ENCODE measurements at regions of chr18 and their contacts with region 1.

Region 1: GRCh38 chr18:10851824-10852319 is 297.5 kb downstream of the PIEZO2 start:
- DNase-seq: peak; percentile 27
- ATAC-seq: no peak
- H3K4me3 ChIP-seq: no peak overlapping the region
- H3K27ac ChIP-seq: no peak overlapping the region
- H3K4me1 ChIP-seq: no peaks in the 10 kb centered on the region
- H3K27me3 ChIP-seq: peaks cover 26% of the 10 kb centered on the region
- CTCF ChIP-seq: peak; percentile 46 to 75 (median 51); a peak in 4 of 6 replicates
- POLR2A ChIP-seq: no peak
- RAD21 ChIP-seq: peak; percentile 63

Region 2: DNA sequence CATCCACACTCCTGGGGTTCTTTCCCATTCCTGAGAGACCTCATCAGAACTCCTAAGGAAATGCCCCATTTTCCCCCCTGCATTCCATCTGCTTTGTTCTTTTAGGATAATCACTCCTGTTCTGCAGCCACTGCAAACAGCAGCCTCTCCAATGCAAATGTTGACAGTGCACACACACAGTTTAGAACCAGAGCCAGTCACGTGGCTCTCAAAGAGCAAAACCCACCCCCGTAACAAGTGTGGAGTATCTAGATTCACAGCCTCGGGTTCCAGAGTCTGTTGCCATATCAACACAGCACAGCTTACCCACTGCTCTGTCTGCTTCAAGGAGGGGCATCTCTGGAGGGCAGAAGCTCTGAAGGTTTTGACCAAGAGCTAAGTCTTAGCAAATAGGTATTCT is 146.1 kb before region 1 on chr18:
- CTCF ChIA-PET with region 1: no interaction called
- POLR2A ChIA-PET with region 1: no interaction called
- RAD21 ChIA-PET with region 1: no interaction called
- intact Hi-C with region 1: no loop called
- DNase-seq: no peak
- ATAC-seq: no peak
- H3K4me3 ChIP-seq: no peak overlapping the region
- H3K27ac ChIP-seq: no peak overlapping the region
- H3K4me1 ChIP-seq: no peaks in the 10 kb centered on the region
- H3K27me3 ChIP-seq: peaks cover 46% of the 10 kb centered on the region
- CTCF ChIP-seq: no peak
- POLR2A ChIP-seq: no peak
- RAD21 ChIP-seq: no peak

Region 3: DNA sequence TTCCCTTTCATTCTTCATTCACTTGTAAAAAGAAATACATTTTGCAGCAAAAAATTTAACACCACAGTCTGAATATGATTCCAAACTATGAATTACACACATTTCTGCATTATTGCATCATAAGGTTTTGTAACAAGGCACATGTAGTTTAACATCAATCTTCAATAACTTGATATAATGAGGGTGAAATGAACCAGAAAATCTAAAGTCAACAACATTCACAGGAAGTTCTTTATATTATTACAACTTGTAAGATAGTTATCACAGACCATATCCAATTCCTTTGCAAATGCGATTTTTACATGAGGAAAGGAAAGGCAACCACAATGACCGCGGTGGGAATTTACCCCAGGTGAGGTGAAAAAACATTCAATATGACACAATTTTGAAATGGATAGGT is 112.7 kb before region 1 on chr18:
- CTCF ChIA-PET with region 1: no interaction called
- POLR2A ChIA-PET with region 1: no interaction called
- RAD21 ChIA-PET with region 1: no interaction called
- intact Hi-C with region 1: no loop called
- DNase-seq: no peak
- ATAC-seq: no peak
- H3K4me3 ChIP-seq: no peak overlapping the region
- H3K27ac ChIP-seq: no peak overlapping the region
- H3K4me1 ChIP-seq: no peaks in the 10 kb centered on the region
- H3K27me3 ChIP-seq: peaks cover 39% of the 10 kb centered on the region
- CTCF ChIP-seq: no peak
- POLR2A ChIP-seq: no peak
- RAD21 ChIP-seq: no peak

Region 4: DNA sequence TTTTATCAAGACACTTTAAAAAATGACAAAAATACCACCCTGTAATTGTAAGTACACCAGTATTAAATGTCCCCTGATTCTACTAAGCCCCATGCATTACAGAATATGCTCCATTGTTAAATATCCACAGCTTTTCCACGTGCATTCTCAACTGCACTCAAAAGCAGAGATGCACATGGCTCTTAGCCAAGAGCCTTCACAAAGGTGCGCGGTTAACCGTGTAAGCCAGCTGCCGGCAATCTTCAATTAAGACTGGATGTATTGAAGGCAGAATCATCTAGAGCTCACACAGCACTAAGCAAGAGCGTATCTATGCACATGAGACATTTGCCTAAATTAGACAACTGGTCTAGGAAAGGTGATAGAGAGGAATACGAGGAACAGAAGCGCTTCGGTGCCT is 47.7 kb before region 1 on chr18:
- CTCF ChIA-PET with region 1: no interaction called
- POLR2A ChIA-PET with region 1: no interaction called
- RAD21 ChIA-PET with region 1: no interaction called
- intact Hi-C with region 1: no loop called
- DNase-seq: no peak
- ATAC-seq: no peak
- H3K4me3 ChIP-seq: no peak overlapping the region
- H3K27ac ChIP-seq: no peak overlapping the region
- H3K4me1 ChIP-seq: peaks cover 0 to 2% of the 10 kb centered on the region in 2 experiments; a peak in 1 of 4 replicates
- H3K27me3 ChIP-seq: peaks cover 15% of the 10 kb centered on the region
- CTCF ChIP-seq: no peak
- POLR2A ChIP-seq: no peak
- RAD21 ChIP-seq: no peak

Region 5: DNA sequence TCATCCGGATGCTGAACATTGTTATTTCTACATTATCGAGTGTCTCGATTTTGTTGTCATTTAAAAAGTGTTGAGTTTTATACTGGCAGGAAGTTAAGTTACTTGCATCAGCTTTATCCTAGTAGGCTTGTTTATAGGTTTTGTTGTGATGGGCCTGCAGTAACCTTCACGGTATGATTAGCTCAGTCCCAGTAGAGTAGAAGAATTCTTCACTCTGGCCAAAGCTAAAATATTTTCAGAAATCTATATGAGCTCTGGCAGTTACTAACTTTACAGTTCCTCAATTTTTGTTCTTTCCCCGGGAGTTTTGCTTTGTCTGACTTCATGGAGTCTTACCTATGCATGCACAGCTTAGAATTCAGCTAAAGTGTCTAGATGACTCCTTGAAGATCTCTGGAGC is 31.2 kb before region 1 on chr18:
- CTCF ChIA-PET with region 1: no interaction called
- POLR2A ChIA-PET with region 1: no interaction called
- RAD21 ChIA-PET with region 1: no interaction called
- intact Hi-C with region 1: no loop called
- DNase-seq: no peak
- ATAC-seq: no peak
- H3K4me3 ChIP-seq: no peak overlapping the region
- H3K27ac ChIP-seq: no peak overlapping the region
- H3K4me1 ChIP-seq: no peaks in the 10 kb centered on the region
- H3K27me3 ChIP-seq: peaks cover 41% of the 10 kb centered on the region
- CTCF ChIP-seq: no peak
- POLR2A ChIP-seq: no peak
- RAD21 ChIP-seq: no peak

Region 6: DNA sequence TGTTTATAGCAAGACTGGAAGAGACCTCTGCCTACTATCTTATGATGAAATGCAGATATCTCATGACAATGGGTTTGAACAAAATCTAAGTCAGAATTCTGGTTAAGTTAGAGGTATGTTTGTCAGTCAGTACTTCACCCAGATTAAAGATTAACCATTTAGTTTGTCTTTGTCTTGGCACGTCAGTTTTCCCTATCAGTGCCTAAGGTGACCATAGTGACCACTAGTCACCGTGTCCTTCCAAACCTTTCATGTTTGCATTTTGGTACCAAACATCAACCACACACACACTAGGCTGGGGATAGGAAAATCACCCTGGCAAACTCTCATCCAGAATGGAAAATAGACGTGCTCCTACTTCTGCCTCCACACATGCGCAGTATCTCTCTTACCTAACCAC is 48.6 kb after region 1 on chr18:
- CTCF ChIA-PET with region 1: no interaction called
- POLR2A ChIA-PET with region 1: no interaction called
- RAD21 ChIA-PET with region 1: no interaction called
- intact Hi-C with region 1: loop called (anchors 5 kb)
- DNase-seq: no peak
- ATAC-seq: no peak
- H3K4me3 ChIP-seq: no peak overlapping the region
- H3K27ac ChIP-seq: no peak overlapping the region
- H3K4me1 ChIP-seq: no peaks in the 10 kb centered on the region
- H3K27me3 ChIP-seq: no peaks in the 10 kb centered on the region; the same call in 1 of the 2 replicates
- CTCF ChIP-seq: no peak
- POLR2A ChIP-seq: no peak
- RAD21 ChIP-seq: no peak

Region 7: GRCh38 chr18:11040823-11041656 is 189.2 kb after region 1 on chr18:
- CTCF ChIA-PET with region 1: interaction called, 42 read pairs
- POLR2A ChIA-PET with region 1: no interaction called
- RAD21 ChIA-PET with region 1: no interaction called
- intact Hi-C with region 1: loop called (anchors 1 kb)
- DNase-seq: peak; percentile 22
- ATAC-seq: peak; percentile 55; the same call in 1 of the 2 replicates
- H3K4me3 ChIP-seq: no peak overlapping the region
- H3K27ac ChIP-seq: no peak overlapping the region
- H3K4me1 ChIP-seq: no peaks in the 10 kb centered on the region
- H3K27me3 ChIP-seq: peaks cover 15% of the 10 kb centered on the region
- CTCF ChIP-seq: peak; percentile 13 to 57 (median 57); a peak in 5 of 6 replicates
- POLR2A ChIP-seq: no peak
- RAD21 ChIP-seq: peak; percentile 40; the same call in 1 of the 2 replicates

Region 8: DNA sequence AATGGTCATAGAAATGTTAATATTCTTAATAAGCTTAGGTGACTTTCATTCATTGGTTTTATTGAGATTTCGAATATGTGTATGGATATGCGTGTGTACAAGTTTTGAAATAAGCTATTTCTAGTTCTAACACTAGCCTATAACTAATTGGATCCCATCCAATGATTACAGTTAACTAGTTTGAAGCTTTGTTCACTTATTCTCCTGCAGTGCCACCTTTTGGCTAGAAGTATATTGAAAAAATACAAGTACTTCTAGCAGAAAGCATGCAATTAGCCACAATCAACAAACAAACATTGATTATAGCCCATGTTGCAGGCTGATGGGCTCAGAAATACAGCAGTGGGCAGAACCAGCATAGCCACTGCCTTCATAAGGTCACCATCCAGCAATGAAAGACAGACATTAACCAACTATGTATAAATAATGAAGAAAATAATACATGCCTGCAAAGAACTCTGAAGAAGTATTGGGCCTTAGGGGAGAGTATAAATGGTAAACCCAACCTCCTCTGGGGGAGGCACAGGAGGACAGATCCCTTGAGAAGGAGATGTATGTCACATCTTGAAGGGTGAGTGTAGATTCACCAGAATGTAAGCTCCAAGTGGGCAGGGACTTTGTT is 302.6 kb after region 1 on chr18:
- CTCF ChIA-PET with region 1: interaction called, 14 read pairs
- POLR2A ChIA-PET with region 1: no interaction called
- RAD21 ChIA-PET with region 1: no interaction called
- intact Hi-C with region 1: loop called (anchors 1 kb)
- DNase-seq: peak; percentile 26
- ATAC-seq: no peak
- H3K4me3 ChIP-seq: no peak overlapping the region
- H3K27ac ChIP-seq: no peak overlapping the region
- H3K4me1 ChIP-seq: no peaks in the 10 kb centered on the region
- H3K27me3 ChIP-seq: 0 out of 2 replicates have a peak, but pooled peaks cover 22% of the 10 kb centered on the region
- CTCF ChIP-seq: peak; percentile 26 to 56 (median 29); a peak in 2 of 6 replicates
- POLR2A ChIP-seq: no peak
- RAD21 ChIP-seq: peak; percentile 57

Region 9: DNA sequence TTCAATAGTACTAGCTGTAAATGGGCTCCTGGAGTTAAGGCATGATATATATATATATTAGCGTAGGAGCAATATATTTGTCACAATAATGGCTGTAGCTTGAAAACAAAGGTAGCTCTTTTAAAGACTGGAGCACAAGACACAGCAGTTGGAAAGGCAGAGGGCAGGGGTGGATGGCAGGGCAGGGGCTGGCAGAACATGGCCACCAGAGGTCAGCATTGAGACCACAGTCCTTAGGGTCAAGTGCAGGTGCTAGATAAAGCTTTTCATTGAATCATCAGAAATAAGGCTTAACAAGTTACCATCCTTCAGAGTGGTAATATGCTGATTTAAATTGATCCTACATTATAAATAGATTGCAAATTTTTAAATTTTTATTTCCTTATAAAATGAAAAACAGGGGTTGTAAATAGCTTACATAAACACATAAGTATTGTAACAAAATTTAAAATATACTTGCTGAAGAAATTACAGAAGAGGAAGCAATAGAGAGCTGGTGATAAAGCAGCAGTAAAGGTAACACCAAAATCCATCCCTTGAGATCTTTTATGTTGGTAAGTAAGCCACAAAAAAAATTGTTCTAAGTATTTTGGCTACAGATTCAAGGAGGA is 458.7 kb after region 1 on chr18:
- CTCF ChIA-PET with region 1: interaction called, 6 read pairs
- POLR2A ChIA-PET with region 1: no interaction called
- RAD21 ChIA-PET with region 1: no interaction called
- intact Hi-C with region 1: loop called (anchors 5 kb)
- DNase-seq: peak; percentile 22
- ATAC-seq: peak; percentile 95
- H3K4me3 ChIP-seq: no peak overlapping the region
- H3K27ac ChIP-seq: no peak overlapping the region
- H3K4me1 ChIP-seq: no peaks in the 10 kb centered on the region
- H3K27me3 ChIP-seq: peaks cover 16% of the 10 kb centered on the region; the same call in 1 of the 2 replicates
- CTCF ChIP-seq: peak; percentile 50 to 91 (median 83); a peak in 5 of 6 replicates
- POLR2A ChIP-seq: no peak
- RAD21 ChIP-seq: peak; percentile 44

Region 10: GRCh38 chr18:11553098-11553940 is 701.4 kb after region 1 on chr18:
- CTCF ChIA-PET with region 1: interaction called, 4 read pairs
- POLR2A ChIA-PET with region 1: no interaction called
- RAD21 ChIA-PET with region 1: no interaction called
- intact Hi-C with region 1: loop called (anchors 5 kb)
- DNase-seq: peak; percentile 45
- ATAC-seq: peak; percentile 91
- H3K4me3 ChIP-seq: no peak overlapping the region
- H3K27ac ChIP-seq: no peak overlapping the region
- H3K4me1 ChIP-seq: no peaks in the 10 kb centered on the region
- H3K27me3 ChIP-seq: peaks cover 51% of the 10 kb centered on the region
- CTCF ChIP-seq: peak; percentile 45 to 91 (median 88); a peak in 5 of 6 replicates
- POLR2A ChIP-seq: no peak
- RAD21 ChIP-seq: peak; percentile 68

Measured in HCT116 (cell line).